ENCODE measurements at regions of chr10 and their contacts with region 1.

Region 1: GRCh38 chr10:6202684-6203330 is at the start of gene PFKFB3:
- DNase-seq: peak; percentile 92
- H3K4me3 Mint-ChIP-seq: peak within 1 kb of the TSS; percentile 96
- H3K27ac Mint-ChIP-seq: peak within 1 kb of the TSS; percentile 92
- H3K4me1 Mint-ChIP-seq: peaks cover 46% of the 10 kb centered on the region
- H3K27me3 Mint-ChIP-seq: no peaks in the 10 kb centered on the region
- total RNA-seq, gene PFKFB3: 90.3 and 93.8 TPM in 2 replicates

Region 2: GRCh38 chr10:5977471-5978229 is 225.2 kb before region 1 on chr10 and contains the start of gene IL15RA:
- intact Hi-C with region 1: loop called (anchors 2 kb)
- DNase-seq: peak; percentile 88
- H3K4me3 Mint-ChIP-seq: peak within 1 kb of the TSS; percentile 93
- H3K27ac Mint-ChIP-seq: peak within 1 kb of the TSS; percentile 90
- H3K4me1 Mint-ChIP-seq: peaks cover 31% of the 10 kb centered on the region
- H3K27me3 Mint-ChIP-seq: peaks cover 3% of the 10 kb centered on the region
- total RNA-seq, gene IL15RA: 23.4 and 24.4 TPM in 2 replicates

Region 3: DNA sequence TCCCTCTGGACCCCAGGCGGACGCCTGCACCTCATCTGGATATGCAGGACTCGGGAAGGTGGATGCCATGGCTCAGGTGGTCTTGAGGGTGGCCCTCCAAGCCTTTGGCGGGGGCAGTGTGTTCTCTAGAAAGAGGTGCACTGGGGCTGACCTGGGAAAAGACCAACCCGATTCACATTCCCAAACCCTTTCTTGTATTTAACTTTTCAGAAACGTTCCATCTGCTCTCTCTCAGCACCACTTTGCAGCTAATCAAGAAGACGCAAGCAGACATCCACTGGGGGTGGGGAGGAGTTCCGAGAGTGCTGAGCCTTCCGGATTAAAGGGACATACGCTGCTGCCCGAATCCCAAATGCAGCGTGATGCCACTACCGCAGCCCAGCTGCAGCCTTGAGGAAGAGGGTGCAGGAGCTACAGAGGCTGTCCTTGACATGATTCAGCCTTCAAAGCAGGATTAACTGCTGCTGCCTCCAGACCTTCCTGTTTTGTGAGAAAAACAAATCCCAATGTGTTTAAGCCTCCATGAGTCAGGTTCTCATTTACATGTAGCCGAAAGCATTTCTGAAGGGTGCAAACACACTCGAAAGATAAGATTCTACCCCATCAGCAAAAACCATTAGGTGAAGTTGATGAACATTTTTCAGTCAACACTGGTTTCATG is 74.1 kb before region 1 on chr10:
- intact Hi-C with region 1: loop called (anchors 5 kb)
- DNase-seq: no peak
- H3K4me3 Mint-ChIP-seq: peak overlapping the region; percentile 67
- H3K27ac Mint-ChIP-seq: peak overlapping the region; percentile 92
- H3K4me1 Mint-ChIP-seq: peaks cover 40% of the 10 kb centered on the region
- H3K27me3 Mint-ChIP-seq: no peaks in the 10 kb centered on the region

Region 4: DNA sequence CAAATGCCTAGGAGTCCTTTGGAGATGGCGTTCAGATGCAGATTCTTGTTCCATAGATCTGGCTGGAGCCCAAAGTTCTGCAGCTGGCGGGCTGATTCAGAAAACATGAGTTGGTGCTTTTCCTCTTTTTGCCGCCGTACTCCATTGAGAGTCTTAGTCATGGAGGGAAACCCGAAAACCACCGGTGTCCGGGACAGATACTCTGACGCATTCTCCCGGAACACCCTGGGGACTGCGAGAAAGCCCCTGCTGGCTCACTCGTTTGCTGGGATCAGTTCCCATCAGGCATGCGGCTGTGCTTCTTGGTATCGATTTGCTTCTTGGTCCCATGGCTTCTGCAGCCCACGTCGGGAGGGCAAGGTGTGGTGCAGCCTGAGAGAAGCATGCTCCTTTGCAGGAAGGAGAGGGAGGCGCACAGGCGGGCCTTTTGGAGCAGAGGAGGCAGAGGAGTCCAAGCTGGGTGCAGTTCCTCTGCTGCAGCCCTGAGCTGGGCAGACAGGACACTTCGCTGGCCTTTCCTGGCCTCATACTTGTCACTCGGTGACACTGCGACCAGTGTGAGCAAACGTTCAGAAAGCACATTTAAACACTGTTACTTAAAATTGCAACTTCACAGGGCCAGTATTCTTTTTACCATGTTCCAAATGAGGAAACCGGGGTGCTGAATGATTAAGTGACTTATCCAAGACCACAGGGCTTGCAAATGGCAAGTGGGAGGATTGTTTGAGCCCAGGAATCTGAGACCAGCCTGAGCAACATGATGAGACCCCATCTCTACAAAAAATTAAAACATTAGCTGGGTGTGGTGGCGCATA is 30.7 kb before region 1 on chr10:
- intact Hi-C with region 1: loop called (anchors 1 kb)
- DNase-seq: peak; percentile 16
- H3K4me3 Mint-ChIP-seq: peak overlapping the region; percentile 66
- H3K27ac Mint-ChIP-seq: peak overlapping the region; percentile 79
- H3K4me1 Mint-ChIP-seq: peaks cover 85% of the 10 kb centered on the region
- H3K27me3 Mint-ChIP-seq: no peaks in the 10 kb centered on the region

Region 5: GRCh38 chr10:6292741-6293151 is 89.9 kb after region 1 on chr10:
- intact Hi-C with region 1: loop called (anchors 5 kb)
- DNase-seq: no peak
- H3K4me3 Mint-ChIP-seq: no peak overlapping the region
- H3K27ac Mint-ChIP-seq: peak overlapping the region; percentile 78
- H3K4me1 Mint-ChIP-seq: peaks cover 63% of the 10 kb centered on the region
- H3K27me3 Mint-ChIP-seq: no peaks in the 10 kb centered on the region

Region 6: DNA sequence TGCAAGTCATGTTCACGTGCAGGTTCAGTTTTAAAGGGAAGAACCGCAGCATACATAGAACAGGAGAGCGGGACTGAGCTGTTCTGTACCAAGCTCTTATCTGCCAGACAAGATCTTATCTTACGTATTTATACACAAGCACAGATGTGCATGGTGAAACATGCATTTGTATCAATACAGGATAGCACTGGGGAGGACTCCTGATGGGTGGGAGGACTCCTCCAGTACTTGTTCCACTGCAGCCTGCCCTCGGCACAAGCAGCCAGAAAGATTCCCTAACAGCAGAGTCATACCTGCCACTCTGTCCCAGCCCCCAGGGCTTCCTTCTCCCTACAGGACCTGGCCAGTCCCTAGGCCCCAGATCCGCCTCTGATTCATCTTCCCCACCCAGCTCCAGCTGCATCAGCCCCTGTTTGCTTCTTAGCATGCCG is 390.4 kb after region 1 on chr10:
- intact Hi-C with region 1: loop called (anchors 5 kb)
- DNase-seq: no peak
- H3K4me3 Mint-ChIP-seq: peak overlapping the region; percentile 34
- H3K27ac Mint-ChIP-seq: peak overlapping the region; percentile 93
- H3K4me1 Mint-ChIP-seq: peaks cover 95% of the 10 kb centered on the region
- H3K27me3 Mint-ChIP-seq: no peaks in the 10 kb centered on the region